Heart left ventricle (tissue), 16 donors: ENCODE measurements at regions of chr12 and their contacts with region 1.

Region 1: DNA sequence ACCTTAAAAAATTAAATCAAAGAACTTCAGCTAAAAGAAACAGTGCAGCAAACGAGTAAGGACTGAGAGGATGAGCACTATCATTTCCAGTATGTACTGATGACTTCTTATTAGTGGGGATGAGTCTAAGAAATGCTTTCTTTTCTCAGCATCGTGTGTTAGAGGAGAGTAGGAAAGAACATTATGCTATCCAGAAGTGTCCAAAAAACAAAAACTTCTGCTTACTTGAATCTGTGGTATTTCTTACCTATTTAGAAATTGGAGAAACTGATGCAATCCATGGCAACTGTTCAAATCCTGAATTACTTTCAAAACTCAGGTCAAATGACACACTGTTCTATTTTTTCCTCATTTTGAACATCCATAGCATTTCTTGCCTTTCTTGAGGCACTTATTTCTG is 23.7 kb downstream of the ABCD2 start:
- DNase-seq: no peak
- ATAC-seq: no peak
- H3K4me3 ChIP-seq: no peak overlapping the region
- H3K27ac ChIP-seq: no peak overlapping the region
- H3K4me1 ChIP-seq: no peaks in the 10 kb centered on the region
- H3K27me3 ChIP-seq: no peaks in the 10 kb centered on the region
- CTCF ChIP-seq: no peak
- POLR2A ChIP-seq: no peak

Region 2: DNA sequence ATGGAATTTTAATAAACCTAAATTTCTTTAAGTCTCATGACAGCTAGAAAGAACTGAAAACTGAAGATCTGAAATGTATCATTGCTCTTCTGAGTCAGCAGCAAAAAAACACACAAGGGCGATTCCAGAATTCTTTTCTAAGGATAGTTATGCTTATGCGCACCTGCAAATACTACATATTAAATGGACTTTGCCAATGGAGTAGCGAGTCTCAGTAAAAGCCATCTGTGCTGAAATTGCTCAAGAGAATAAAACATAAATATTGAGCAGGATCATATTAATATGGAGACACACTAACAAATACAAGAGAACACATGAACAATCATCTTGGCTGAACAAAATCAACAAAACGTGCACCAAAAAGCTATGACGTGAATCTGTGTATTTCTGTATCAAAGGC is 764.2 kb before region 1 on chr12:
- intact Hi-C with region 1: loop called in 1 of 10 experiments (anchors 5 kb)
- DNase-seq: no peak
- ATAC-seq: no peak
- H3K4me3 ChIP-seq: no peak overlapping the region
- H3K27ac ChIP-seq: no peak overlapping the region
- H3K4me1 ChIP-seq: peaks cover 0 to 8% (median 0%) of the 10 kb centered on the region in 12 donors
- H3K27me3 ChIP-seq: no peaks in the 10 kb centered on the region
- CTCF ChIP-seq: no peak
- POLR2A ChIP-seq: no peak

Region 3: DNA sequence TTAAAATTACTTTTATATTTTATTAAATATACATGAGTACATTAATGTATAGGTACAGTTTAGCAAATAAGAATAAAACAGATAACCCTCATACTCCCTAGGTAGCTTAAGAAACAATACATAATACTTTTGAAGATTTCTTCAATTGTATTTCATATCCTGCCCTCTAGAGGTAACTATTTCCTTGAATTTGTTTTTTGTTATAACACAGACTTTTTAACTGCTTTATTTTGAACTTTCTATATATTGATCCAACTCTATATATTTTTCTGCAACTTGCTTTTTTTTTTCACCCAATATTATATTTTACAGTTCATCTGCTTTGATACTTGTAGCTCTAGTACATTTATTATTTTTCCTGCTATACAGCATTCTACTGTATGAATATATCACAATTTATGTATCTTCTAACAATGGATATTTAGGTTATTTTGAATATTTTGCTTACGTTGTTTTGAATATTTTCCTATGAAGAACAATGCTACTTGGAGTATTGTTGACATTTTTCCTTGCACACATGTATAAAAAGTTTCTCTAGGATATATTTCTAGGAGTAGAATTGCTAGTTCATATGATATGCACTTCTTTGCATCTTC is 96.4 kb after region 1 on chr12:
- intact Hi-C with region 1: loop called in 2 of 10 experiments (anchors 10 kb)
- DNase-seq: no peak
- ATAC-seq: no peak
- H3K4me3 ChIP-seq: no peak overlapping the region
- H3K27ac ChIP-seq: no peak overlapping the region
- H3K4me1 ChIP-seq: no peaks in the 10 kb centered on the region
- H3K27me3 ChIP-seq: no peaks in the 10 kb centered on the region
- CTCF ChIP-seq: peak in 10 of 12 donors; percentile 22 to 55 (median 44)
- POLR2A ChIP-seq: no peak

Region 4: DNA sequence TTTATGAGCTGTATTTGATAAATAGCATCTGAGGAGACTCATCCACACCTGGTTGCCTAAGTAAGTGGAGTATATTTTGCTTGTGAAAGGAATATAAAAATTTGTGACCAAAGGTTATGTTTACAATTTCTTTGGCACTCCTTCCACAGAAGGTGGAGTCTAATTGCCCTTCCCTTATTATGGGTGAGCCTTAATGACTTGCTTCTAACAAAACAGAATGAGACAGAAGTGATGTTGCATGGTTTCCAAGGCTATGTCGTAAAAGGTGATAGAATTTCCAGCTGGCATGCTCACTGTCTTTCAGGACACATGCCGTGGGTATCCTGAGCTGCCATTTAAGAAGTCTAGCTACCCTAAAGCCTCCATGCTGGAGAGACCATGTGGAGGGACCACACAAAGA is 140.5 kb after region 1 on chr12:
- intact Hi-C with region 1: no loop called
- DNase-seq: no peak
- ATAC-seq: no peak
- H3K4me3 ChIP-seq: no peak overlapping the region
- H3K27ac ChIP-seq: no peak overlapping the region
- H3K4me1 ChIP-seq: no peaks in the 10 kb centered on the region
- H3K27me3 ChIP-seq: no peaks in the 10 kb centered on the region
- CTCF ChIP-seq: no peak
- POLR2A ChIP-seq: no peak

Region 5: DNA sequence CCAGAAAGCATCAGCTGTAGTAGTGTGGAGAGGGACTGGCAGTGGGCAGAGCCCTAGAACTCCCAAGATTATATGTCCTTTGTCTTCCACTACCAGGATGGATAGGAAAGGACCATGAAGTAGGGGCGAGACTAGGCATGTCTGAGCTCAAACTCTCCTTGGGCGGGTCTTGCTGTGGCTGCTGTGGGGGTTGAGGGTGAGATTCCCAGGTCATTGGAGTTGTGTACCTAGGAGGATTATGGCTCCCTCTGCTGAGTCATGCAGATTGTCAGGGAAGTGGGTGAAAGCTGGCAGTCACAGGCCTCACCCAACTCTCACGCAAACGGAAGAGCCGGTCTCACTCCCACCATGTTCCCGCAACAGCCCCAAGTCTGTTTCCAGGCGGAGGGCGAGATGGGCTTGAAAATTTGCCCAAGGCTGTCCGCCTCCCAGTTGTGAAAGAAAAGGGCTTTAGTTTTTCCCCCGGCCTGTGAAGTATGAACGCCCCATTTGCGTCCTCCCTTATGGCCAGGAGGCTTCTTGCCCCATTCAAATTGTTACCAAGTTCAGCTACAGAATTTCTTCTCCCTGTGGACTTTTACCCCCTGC is 350.5 kb after region 1 on chr12:
- intact Hi-C with region 1: no loop called
- DNase-seq: no peak
- ATAC-seq: no peak
- H3K4me3 ChIP-seq: no peak overlapping the region
- H3K27ac ChIP-seq: no peak overlapping the region
- H3K4me1 ChIP-seq: no peaks in the 10 kb centered on the region
- H3K27me3 ChIP-seq: no peaks in the 10 kb centered on the region
- CTCF ChIP-seq: no peak
- POLR2A ChIP-seq: no peak